ENCODE measurements at regions of chr17 and their contacts with region 1.

Region 1: GRCh38 chr17:39730095-39730921 is at the start of gene MIEN1:
- DNase-seq: peak; percentile 86 to 98 (median 94)
- ATAC-seq: peak; percentile 91
- H3K4me3 ChIP-seq: peak within 1 kb of the TSS; percentile 79
- H3K4me3 Mint-ChIP-seq: peak within 1 kb of the TSS; percentile 91
- H3K27ac ChIP-seq: peak within 1 kb of the TSS; percentile 90 to 91
- H3K27ac Mint-ChIP-seq: peak within 1 kb of the TSS; percentile 88
- H3K4me1 ChIP-seq: peaks cover 23% of the 10 kb centered on the region
- H3K4me1 Mint-ChIP-seq: peaks cover 17% of the 10 kb centered on the region
- H3K27me3 ChIP-seq: no peaks in the 10 kb centered on the region
- H3K27me3 Mint-ChIP-seq: no peaks in the 10 kb centered on the region
- CTCF ChIP-seq: peak; percentile 91
- total RNA-seq, gene MIEN1: 31.5 to 32.3 TPM

Region 2: DNA sequence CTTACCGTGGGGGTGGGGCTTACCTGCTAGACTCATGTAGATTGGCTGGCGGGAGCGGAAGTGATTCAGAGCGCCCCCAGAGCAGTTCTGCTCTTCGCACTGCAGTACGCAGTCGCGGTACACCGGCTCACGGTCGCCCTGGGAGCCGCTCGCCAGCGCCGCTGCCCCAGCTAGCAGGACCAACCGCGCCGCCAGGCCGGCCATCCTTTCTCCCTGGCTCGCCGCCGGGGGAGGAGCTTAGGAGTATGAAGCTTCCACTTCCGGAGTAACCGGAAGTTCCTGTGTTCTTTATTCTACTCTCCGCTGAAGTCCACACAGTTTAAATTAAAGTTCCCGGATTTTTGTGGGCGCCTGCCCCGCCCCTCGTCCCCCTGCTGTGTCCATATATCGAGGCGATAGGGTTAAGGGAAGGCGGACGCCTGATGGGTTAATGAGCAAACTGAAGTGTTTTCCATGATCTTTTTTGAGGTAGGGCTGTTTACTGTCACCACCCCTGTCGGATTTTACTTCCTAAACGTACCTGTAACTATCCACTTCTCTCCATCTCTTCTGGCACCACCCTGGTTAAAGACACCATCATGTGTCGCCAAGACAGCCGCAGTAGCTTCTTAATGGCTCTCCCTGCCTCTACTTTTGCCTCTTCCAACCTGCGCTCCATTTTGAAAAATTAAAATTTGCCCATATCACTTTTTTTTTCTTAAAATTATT is 42.3 kb before region 1 on chr17 and contains the start of gene PGAP3:
- CTCF ChIA-PET with region 1: interaction called, 8 read pairs
- POLR2A ChIA-PET with region 1: interaction called, 19 read pairs
- intact Hi-C with region 1: loop called (anchors 1 to 2 kb)
- DNase-seq: peak; percentile 66 to 91 (median 74)
- ATAC-seq: peak; percentile 87
- H3K4me3 ChIP-seq: peak within 1 kb of the TSS; percentile 74
- H3K4me3 Mint-ChIP-seq: peak within 1 kb of the TSS; percentile 100
- H3K27ac ChIP-seq: peak within 1 kb of the TSS; percentile 83
- H3K27ac Mint-ChIP-seq: peak within 1 kb of the TSS; percentile 98
- H3K4me1 ChIP-seq: peaks cover 19% of the 10 kb centered on the region
- H3K4me1 Mint-ChIP-seq: peaks cover 31% of the 10 kb centered on the region
- H3K27me3 ChIP-seq: no peaks in the 10 kb centered on the region
- H3K27me3 Mint-ChIP-seq: no peaks in the 10 kb centered on the region
- CTCF ChIP-seq: no peak
- total RNA-seq, gene PGAP3: 26.1 to 30.7 TPM

Region 3: GRCh38 chr17:39800540-39800939 is 70.2 kb after region 1 on chr17:
- CTCF ChIA-PET with region 1: no interaction called
- POLR2A ChIA-PET with region 1: no interaction called
- intact Hi-C with region 1: no loop called
- DNase-seq: peak in 13 of 14 experiments; percentile 37 to 88 (median 51)
- ATAC-seq: peak; percentile 98
- H3K4me3 ChIP-seq: no peak overlapping the region
- H3K4me3 Mint-ChIP-seq: peak overlapping the region; percentile 39
- H3K27ac ChIP-seq: peak overlapping the region; percentile 24 to 58
- H3K27ac Mint-ChIP-seq: peak overlapping the region; percentile 92
- H3K4me1 ChIP-seq: peaks cover 33% of the 10 kb centered on the region
- H3K4me1 Mint-ChIP-seq: peaks cover 65% of the 10 kb centered on the region
- H3K27me3 ChIP-seq: no peaks in the 10 kb centered on the region
- H3K27me3 Mint-ChIP-seq: no peaks in the 10 kb centered on the region
- CTCF ChIP-seq: no peak

Region 4: GRCh38 chr17:39963829-39964228 is 233.5 kb after region 1 on chr17:
- CTCF ChIA-PET with region 1: no interaction called
- POLR2A ChIA-PET with region 1: no interaction called
- intact Hi-C with region 1: no loop called
- DNase-seq: peak in 13 of 14 experiments; percentile 16 to 68 (median 52)
- ATAC-seq: peak; percentile 71
- H3K4me3 ChIP-seq: no peak overlapping the region
- H3K4me3 Mint-ChIP-seq: no peak overlapping the region
- H3K27ac ChIP-seq: no peak overlapping the region
- H3K27ac Mint-ChIP-seq: peak overlapping the region; percentile 30
- H3K4me1 ChIP-seq: peaks cover 38% of the 10 kb centered on the region
- H3K4me1 Mint-ChIP-seq: peaks cover 37% of the 10 kb centered on the region
- H3K27me3 ChIP-seq: no peaks in the 10 kb centered on the region
- H3K27me3 Mint-ChIP-seq: no peaks in the 10 kb centered on the region
- CTCF ChIP-seq: no peak

Region 5: GRCh38 chr17:39996800-39997199 is 266.5 kb after region 1 on chr17:
- CTCF ChIA-PET with region 1: no interaction called
- POLR2A ChIA-PET with region 1: no interaction called
- intact Hi-C with region 1: no loop called
- DNase-seq: no peak
- ATAC-seq: no peak
- H3K4me3 ChIP-seq: no peak overlapping the region
- H3K4me3 Mint-ChIP-seq: no peak overlapping the region
- H3K27ac ChIP-seq: no peak overlapping the region
- H3K27ac Mint-ChIP-seq: no peak overlapping the region
- H3K4me1 ChIP-seq: no peaks in the 10 kb centered on the region
- H3K4me1 Mint-ChIP-seq: no peaks in the 10 kb centered on the region
- H3K27me3 ChIP-seq: no peaks in the 10 kb centered on the region
- H3K27me3 Mint-ChIP-seq: no peaks in the 10 kb centered on the region
- CTCF ChIP-seq: no peak

Measured in CD4-positive, alpha-beta T cell (primary cell).